ENCODE measurements at regions of chr12 and their contacts with region 1.

Region 1: DNA sequence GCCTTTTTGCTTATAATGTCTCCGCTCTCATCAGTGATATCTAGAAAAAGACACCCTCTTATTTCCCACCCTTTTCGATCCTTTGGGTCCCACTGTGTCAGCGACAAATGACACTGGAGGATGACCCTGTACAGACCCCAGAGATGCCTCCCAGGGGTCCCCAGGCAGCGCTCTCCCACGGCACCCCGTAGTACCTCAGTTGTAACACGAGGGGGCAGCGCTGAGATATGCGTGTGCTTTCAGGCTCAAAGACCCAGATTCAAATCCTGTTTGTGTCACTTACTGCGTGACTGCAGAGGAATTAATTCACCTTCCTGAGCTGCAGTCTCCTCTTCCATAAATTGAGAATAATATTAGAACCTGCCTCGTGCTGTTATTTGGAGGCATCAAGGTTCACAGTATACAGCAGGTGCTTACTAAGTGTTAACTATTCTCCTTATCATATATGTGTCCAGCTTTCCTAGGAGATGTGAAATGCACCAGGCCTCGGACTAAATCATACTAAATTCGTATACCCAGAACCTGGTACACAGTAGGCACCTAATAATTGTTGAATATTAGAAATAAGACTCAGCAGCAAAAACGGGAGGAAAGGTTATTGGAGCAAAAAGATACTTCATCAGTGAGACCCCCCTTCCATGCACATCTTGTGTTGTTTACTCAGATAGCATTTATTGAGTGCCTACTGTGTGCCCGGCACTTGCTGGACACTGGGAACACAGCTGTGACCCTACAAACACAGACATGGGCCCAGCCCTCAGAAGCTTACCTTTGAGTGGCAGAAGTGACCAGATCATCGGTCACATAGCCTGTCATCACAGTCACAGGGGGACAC is 99.9 kb downstream of the PHETA1 start:
- DNase-seq: peak; percentile 44
- ATAC-seq: peak; percentile 58
- H3K4me3 Mint-ChIP-seq: no peak overlapping the region
- H3K27ac Mint-ChIP-seq: no peak overlapping the region
- H3K4me1 Mint-ChIP-seq: no peaks in the 10 kb centered on the region
- H3K27me3 Mint-ChIP-seq: peaks cover 4% of the 10 kb centered on the region
- CTCF ChIP-seq: peak; percentile 79

Region 2: GRCh38 chr12:110885152-110885840 is 383.7 kb before region 1 on chr12:
- CTCF ChIA-PET with region 1: no interaction called
- POLR2A ChIA-PET with region 1: no interaction called
- intact Hi-C with region 1: no loop called
- DNase-seq: no peak
- ATAC-seq: no peak
- H3K4me3 Mint-ChIP-seq: no peak overlapping the region
- H3K27ac Mint-ChIP-seq: no peak overlapping the region
- H3K4me1 Mint-ChIP-seq: peaks cover 4% of the 10 kb centered on the region
- H3K27me3 Mint-ChIP-seq: no peaks in the 10 kb centered on the region
- CTCF ChIP-seq: no peak

Region 3: DNA sequence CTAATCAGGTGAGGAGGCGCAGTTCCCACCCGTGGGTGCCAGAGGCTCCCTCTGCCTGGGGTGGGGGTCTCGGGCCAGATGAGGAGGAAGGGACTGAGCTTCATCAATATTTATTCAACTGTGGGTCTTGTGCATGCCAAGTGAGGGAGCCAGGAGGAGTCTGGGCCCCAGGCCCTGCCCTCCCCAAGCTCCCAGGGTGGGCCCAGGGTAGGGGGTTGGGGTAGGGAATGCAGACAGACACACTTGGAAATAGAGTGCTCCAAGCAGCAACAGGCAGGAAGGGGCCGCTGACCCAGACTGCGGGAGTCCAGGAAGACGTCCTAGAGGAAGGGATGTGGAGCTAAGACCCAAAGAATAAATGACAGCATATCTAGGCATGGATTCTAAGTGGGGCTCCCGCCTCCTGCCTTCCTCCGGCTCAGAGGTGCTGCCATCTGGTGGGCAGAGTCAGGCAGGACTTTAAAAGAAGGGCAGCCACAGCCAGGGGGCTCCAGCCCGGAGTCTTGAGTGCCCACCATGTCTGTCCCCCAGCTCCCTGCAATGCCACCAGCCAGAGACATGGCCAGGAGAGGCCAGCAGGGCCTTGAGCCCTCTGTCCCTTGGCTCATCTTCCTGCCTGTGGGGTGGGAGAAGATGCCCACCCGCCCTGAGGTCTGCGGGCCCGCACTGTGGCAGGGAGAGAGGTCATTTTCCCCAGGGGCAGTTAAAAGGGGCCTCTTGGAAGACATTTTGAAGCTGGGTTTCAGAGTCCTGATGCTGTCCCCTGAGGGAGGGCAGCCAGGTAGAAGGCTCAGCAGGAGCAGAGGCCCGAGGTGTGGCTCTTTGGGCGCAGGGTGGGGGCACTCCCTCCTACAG is 29.9 kb after region 1 on chr12:
- CTCF ChIA-PET with region 1: interaction called, 23 read pairs
- POLR2A ChIA-PET with region 1: no interaction called
- intact Hi-C with region 1: no loop called
- DNase-seq: peak; percentile 69
- ATAC-seq: peak; percentile 66
- H3K4me3 Mint-ChIP-seq: no peak overlapping the region
- H3K27ac Mint-ChIP-seq: no peak overlapping the region
- H3K4me1 Mint-ChIP-seq: no peaks in the 10 kb centered on the region
- H3K27me3 Mint-ChIP-seq: peaks cover 3% of the 10 kb centered on the region
- CTCF ChIP-seq: peak; percentile 82

Measured in activated CD8-positive, alpha-beta T cell treated with anti-CD3 and anti-CD28 coated beads for 36 hours (primary cell).